ENCODE measurements at regions of chr1 and their contacts with region 1.

Region 1: DNA sequence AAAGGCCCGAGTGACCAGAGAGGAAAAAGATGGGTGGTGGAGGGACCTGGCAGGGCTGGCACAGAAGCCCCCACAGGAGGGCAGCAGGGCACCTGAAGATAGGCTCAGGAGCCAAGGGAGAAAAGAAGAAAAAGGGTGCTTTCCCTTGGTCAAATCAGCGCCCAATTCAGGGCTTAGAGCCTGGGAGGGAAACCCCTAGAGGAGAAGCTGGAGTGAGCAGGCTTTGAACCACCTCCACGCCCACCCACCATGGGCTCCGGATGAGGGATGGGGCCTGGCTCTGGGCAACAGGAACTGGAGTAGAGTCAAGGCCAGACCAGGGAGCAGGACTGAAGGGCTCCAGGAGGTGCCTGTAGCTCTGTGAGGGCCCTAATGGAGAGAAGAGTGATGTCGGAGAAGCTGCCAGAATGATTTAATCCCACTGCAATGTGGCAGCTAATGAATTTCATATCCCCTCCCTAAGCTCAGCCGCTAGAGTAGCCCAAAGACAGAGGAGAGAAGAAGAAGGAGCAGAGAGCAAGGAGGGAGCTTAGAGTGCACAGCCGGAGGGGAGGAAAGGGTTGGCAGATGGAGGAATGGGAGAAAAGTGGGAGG is 12.0 kb upstream of the PRELP start:
- DNase-seq: no peak
- H3K27ac ChIP-seq: no peak overlapping the region
- CTCF ChIP-seq: no peak

Region 2: DNA sequence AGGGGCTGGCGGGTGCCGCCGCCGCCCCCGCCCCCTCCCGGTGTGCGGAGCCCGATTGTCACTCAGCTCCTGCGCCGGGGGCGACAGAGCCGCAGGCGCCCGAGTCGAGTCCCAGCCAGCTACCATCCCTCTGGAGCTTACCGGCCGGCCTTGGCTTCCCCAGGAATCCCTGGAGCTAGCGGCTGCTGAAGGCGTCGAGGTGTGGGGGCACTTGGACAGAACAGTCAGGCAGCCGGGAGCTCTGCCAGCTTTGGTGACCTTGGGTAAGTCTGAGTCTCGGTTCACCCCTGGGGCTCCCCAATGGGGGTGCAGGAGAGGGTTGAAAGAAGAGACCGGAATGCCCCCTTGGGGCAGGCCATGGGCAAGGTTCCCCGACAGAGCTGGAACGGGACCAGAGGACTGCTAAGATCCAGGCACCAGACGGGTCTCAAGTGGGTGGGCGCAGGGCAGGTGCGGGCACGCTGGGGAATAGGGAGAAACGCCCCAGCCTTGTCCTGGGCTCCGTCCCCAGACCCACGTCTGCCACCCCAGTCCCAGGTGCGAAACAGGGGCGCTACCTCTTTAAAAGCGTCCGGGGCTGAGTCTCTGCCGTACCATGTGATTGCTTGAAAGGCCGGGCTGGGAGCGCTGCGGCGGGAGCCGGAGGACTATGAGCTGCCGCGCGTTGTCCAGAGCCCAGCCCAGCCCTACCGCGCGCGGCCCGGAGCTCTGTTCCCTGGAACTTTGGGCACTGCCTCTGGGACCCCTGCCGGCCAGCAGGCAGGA is 335.7 kb before region 1 on chr1 and contains the start of gene ADORA1:
- CTCF ChIA-PET with region 1: no interaction called
- POLR2A ChIA-PET with region 1: no interaction called
- DNase-seq: peak; percentile 71
- H3K27ac ChIP-seq: peak within 1 kb of the TSS; percentile 18; the same call in 1 of the 2 replicates
- CTCF ChIP-seq: no peak

Region 3: DNA sequence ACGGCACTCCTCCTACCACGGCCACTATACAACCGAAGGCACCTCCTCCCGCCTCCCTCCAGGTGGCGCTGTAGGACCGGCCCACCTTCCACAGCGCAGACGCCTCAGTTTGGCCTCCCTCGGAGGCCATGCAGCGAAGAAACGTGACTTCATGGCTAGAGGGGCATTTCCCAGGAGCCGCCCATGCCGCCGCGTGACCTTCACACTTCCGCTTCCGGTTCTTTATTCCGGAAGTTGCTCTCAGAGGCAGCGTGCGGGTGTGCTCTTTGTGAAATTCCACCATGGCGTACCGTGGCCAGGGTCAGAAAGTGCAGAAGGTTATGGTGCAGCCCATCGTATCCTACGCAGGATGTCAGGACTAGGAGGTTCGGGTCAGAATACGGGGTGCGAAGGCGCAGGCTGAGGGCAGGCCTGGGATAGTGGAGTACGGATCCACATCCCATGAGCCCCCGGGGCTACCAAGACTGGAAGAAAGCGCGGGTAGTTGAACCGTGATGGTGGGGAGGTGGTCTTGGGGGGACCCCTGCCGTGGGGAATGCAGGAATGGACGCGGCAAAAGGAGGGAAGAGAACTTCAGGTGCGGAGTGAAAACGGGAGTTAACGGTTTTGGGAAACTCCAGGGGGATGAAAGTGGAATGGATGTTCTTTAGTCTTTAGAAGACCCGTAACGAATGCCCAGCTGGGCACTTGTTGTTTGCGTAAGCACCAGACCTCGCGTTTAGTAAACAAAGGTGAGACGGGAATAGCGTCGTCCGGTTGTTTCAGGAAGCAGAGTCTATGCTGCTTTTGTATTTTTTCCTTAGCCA is 398.0 kb after region 1 on chr1 and contains the start of gene SNRPE:
- CTCF ChIA-PET with region 1: interaction called, 11 read pairs
- POLR2A ChIA-PET with region 1: no interaction called
- DNase-seq: peak; percentile 98
- H3K27ac ChIP-seq: peak within 1 kb of the TSS; percentile 99
- CTCF ChIP-seq: peak; percentile 96

Measured in RWPE1 (cell line).